Activated CD4-positive, alpha-beta memory T cell treated with anti-CD3 and anti-CD28 coated beads for 36 hours (primary cell): ENCODE measurements at regions of chr2 and their contacts with region 1.

Region 1: GRCh38 chr2:28566521-28567041 is 70.7 kb downstream of the PLB1 start:
- DNase-seq: peak; percentile 94
- H3K4me3 Mint-ChIP-seq: peak overlapping the region; percentile 83
- H3K27ac Mint-ChIP-seq: peak overlapping the region; percentile 38
- H3K4me1 Mint-ChIP-seq: peaks cover 15% of the 10 kb centered on the region
- H3K27me3 Mint-ChIP-seq: no peaks in the 10 kb centered on the region

Region 2: GRCh38 chr2:28577791-28578680 is 11.5 kb after region 1 on chr2:
- CTCF ChIA-PET with region 1: interaction called, 14 read pairs
- POLR2A ChIA-PET with region 1: no interaction called
- intact Hi-C with region 1: no loop called
- DNase-seq: no peak
- H3K4me3 Mint-ChIP-seq: no peak overlapping the region
- H3K27ac Mint-ChIP-seq: no peak overlapping the region
- H3K4me1 Mint-ChIP-seq: peaks cover 4% of the 10 kb centered on the region
- H3K27me3 Mint-ChIP-seq: no peaks in the 10 kb centered on the region

Region 3: GRCh38 chr2:28751252-28751955 is 184.8 kb after region 1 on chr2 and contains the start of gene PPP1CB:
- CTCF ChIA-PET with region 1: interaction called, 9 read pairs
- POLR2A ChIA-PET with region 1: interaction called, 10 read pairs
- intact Hi-C with region 1: loop called (anchors 1 kb)
- DNase-seq: peak; percentile 96
- H3K4me3 Mint-ChIP-seq: peak within 1 kb of the TSS; percentile 85
- H3K27ac Mint-ChIP-seq: peak within 1 kb of the TSS; percentile 96
- H3K4me1 Mint-ChIP-seq: peaks cover 51% of the 10 kb centered on the region
- H3K27me3 Mint-ChIP-seq: no peaks in the 10 kb centered on the region
- total RNA-seq, gene PPP1CB: 238 to 256 TPM

Region 4: DNA sequence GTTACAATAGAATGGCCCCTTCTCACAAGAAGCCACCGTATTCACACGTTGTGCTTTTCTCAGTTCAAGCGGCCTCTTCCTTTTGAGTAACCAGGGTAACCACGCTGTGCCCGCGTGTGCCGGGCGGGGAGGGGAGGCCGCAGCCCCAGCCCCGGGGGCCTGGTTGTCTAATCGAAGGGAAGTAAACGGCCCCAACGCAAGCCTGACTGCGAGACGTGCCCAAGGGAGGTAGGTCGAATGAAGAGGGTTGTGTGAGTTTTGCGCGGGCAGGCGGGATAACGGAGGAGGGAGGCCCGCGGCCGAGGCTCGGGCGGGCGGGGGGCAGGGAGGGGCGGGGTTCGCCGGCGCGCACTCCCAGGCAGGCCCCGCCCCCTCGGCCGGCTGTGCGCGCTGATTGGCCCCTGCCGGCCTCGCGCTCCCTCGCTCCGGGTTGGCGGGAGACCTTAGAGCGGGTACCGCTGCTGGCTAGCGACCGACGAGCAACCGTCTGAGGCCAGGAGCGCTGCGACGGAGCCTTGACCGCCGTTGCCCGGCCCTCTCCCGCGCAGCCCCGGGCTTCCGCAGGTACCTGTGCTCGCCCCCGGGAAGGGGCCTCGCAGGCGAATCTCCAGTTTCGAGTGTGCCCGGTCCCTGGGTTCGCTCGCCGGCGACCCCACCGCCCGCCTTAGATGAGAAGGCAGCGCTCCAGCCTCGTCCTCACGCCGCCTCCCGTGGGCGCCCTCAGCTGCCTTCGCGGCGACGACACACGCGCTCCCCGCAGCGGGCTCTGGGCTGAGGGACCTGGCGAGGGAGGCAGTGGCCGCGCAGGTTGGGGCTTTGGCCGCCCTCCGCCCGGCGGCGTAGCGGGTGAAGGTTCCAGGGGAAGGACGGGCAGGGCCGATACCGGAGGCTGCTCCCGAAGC is 244.1 kb after region 1 on chr2 and contains the start of gene SPDYA:
- CTCF ChIA-PET with region 1: interaction called, 3 read pairs
- POLR2A ChIA-PET with region 1: no interaction called
- intact Hi-C with region 1: loop called (anchors 1 kb)
- DNase-seq: peak; percentile 86
- H3K4me3 Mint-ChIP-seq: peak within 1 kb of the TSS; percentile 74
- H3K27ac Mint-ChIP-seq: no peak within 1 kb of the TSS
- H3K4me1 Mint-ChIP-seq: peaks cover 13% of the 10 kb centered on the region
- H3K27me3 Mint-ChIP-seq: peaks cover 2% of the 10 kb centered on the region
- total RNA-seq, gene SPDYA: 0.92 to 1.1 TPM

Region 5: GRCh38 chr2:28870146-28870891 is 303.7 kb after region 1 on chr2 and contains the start of gene TRMT61B:
- CTCF ChIA-PET with region 1: interaction called, 4 read pairs
- POLR2A ChIA-PET with region 1: no interaction called
- intact Hi-C with region 1: loop called (anchors 1 kb)
- DNase-seq: peak; percentile 98
- H3K4me3 Mint-ChIP-seq: peak within 1 kb of the TSS; percentile 93
- H3K27ac Mint-ChIP-seq: peak within 1 kb of the TSS; percentile 89
- H3K4me1 Mint-ChIP-seq: peaks cover 29% of the 10 kb centered on the region
- H3K27me3 Mint-ChIP-seq: no peaks in the 10 kb centered on the region
- total RNA-seq, gene TRMT61B: 16.7 to 18.1 TPM

Region 6: GRCh38 chr2:28958689-28959088 is 392.1 kb after region 1 on chr2:
- CTCF ChIA-PET with region 1: no interaction called
- POLR2A ChIA-PET with region 1: no interaction called
- intact Hi-C with region 1: loop called (anchors 10 kb)
- DNase-seq: peak; percentile 40
- H3K4me3 Mint-ChIP-seq: no peak overlapping the region
- H3K27ac Mint-ChIP-seq: no peak overlapping the region
- H3K4me1 Mint-ChIP-seq: peaks cover 3% of the 10 kb centered on the region
- H3K27me3 Mint-ChIP-seq: no peaks in the 10 kb centered on the region